A673 (cell line): ENCODE measurements at regions of chr17 and their contacts with region 1.

Region 1: GRCh38 chr17:77022766-77023165 is 118.0 kb upstream of the SEC14L1 start:
- DNase-seq: no peak
- H3K4me3 ChIP-seq: no peak overlapping the region
- H3K27ac ChIP-seq: no peak overlapping the region
- H3K4me1 ChIP-seq: no peaks in the 10 kb centered on the region
- H3K27me3 ChIP-seq: no peaks in the 10 kb centered on the region
- CTCF ChIP-seq: no peak

Region 2: GRCh38 chr17:76791053-76791980 is 231.4 kb before region 1 on chr17:
- CTCF ChIA-PET with region 1: no interaction called
- POLR2A ChIA-PET with region 1: no interaction called
- intact Hi-C with region 1: no loop called
- DNase-seq: peak; percentile 77
- H3K4me3 ChIP-seq: peak overlapping the region; percentile 17
- H3K27ac ChIP-seq: peak overlapping the region; percentile 72
- H3K4me1 ChIP-seq: peaks cover 16% of the 10 kb centered on the region
- H3K27me3 ChIP-seq: no peaks in the 10 kb centered on the region
- CTCF ChIP-seq: no peak

Region 3: GRCh38 chr17:76968707-76969597 is 53.8 kb before region 1 on chr17:
- CTCF ChIA-PET with region 1: no interaction called
- POLR2A ChIA-PET with region 1: no interaction called
- intact Hi-C with region 1: no loop called
- DNase-seq: peak; percentile 86
- H3K4me3 ChIP-seq: peak overlapping the region; percentile 48
- H3K27ac ChIP-seq: peak overlapping the region; percentile 70
- H3K4me1 ChIP-seq: peaks cover 10% of the 10 kb centered on the region
- H3K27me3 ChIP-seq: no peaks in the 10 kb centered on the region
- CTCF ChIP-seq: no peak

Region 4: DNA sequence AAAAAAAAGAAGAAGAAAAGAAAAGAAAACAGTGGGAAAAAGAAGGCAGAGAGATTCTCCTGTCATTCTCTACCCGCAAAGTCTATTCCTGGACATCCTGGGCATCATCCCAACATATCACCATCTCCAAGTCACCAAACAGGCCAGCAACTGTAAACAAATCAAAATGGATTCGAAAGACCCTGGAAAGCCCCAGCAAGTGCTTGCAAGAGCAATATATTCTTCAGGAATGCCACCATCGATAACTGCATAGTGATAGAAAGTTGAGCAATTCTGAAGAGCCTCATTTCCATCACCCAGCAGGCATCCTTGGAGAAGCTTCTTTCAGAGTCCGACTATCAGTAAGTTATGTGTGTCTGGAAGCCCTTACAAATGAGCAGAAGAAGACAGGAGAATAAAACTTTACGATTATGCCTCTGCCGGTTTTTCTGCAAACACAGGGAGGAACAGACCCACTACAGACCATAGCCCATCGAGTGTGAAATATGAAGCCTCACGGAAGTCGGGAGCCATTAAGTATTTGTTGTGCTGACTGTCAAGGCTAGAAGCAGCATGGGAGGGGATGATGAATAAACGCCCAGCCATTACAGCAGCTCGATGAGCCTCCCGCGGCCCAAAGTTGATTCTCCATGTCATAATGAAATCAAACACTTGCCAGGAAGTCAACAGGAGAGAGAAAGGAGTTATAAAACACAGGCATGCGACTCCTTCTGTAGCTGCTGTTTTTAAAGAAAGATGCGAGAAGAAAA is 53.5 kb after region 1 on chr17:
- CTCF ChIA-PET with region 1: interaction called, 12 read pairs
- POLR2A ChIA-PET with region 1: no interaction called
- intact Hi-C with region 1: no loop called
- DNase-seq: peak; percentile 70
- H3K4me3 ChIP-seq: peak overlapping the region; percentile 24
- H3K27ac ChIP-seq: peak overlapping the region; percentile 60
- H3K4me1 ChIP-seq: peaks cover 12% of the 10 kb centered on the region
- H3K27me3 ChIP-seq: no peaks in the 10 kb centered on the region
- CTCF ChIP-seq: no peak